ENCODE measurements at regions of chr10 and their contacts with region 1.

Region 1: DNA sequence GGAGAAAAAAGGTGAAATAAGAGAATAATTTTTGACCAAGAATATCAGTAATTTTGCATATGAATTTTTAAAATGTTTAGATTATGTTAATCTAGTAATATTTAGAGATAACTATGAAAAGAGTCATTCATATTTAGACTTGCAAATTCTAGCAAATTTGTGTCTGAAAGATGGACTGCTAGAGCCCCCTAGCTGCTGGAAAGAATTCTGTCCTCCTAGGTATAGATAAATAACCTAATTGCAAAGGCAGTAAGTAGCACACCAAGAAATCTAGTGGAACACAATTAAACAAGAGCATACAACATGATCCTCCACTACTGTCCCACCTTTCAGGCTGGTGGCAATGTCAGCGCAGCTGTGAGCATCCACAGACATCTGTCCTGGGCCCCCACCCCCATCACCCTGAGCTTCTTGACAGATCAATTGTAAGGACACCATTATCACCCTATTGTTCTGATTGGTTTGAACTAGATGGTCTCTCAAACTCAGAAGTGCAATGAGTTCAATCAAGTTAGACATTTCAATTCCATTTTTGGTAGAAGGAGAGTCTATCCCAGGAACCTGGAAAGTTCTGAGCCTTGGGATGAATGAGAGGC is 15.0 kb upstream of the GFRA1 start:
- DNase-seq: no peak
- ATAC-seq: peak; percentile 79

Region 2: GRCh38 chr10:115829521-115830205 is 458.3 kb before region 1 on chr10:
- intact Hi-C with region 1: loop called (anchors 10 kb)
- DNase-seq: no peak
- ATAC-seq: peak; percentile 82

Measured in sciatic nerve (tissue), 2 donors.